Dendritic cell treated with granulocyte-macrophage colony-stimulating factor and Interleukin-4, amounts not matched to agents 40 ng/mL and 50 ng/mL, for 4 days (primary cell): ENCODE measurements at regions of chr17 and their contacts with region 1.

Region 1: GRCh38 chr17:80892019-80892855 is 99.4 kb upstream of the CHMP6 start:
- H3K4me3 Mint-ChIP-seq: peak overlapping the region; percentile 59
- H3K27ac Mint-ChIP-seq: peak overlapping the region; percentile 81
- H3K4me1 Mint-ChIP-seq: peaks cover 48% of the 10 kb centered on the region
- H3K27me3 Mint-ChIP-seq: peaks cover 7% of the 10 kb centered on the region

Region 2: GRCh38 chr17:80832888-80833583 is 59.2 kb before region 1 on chr17:
- intact Hi-C with region 1: no loop called
- H3K4me3 Mint-ChIP-seq: peak overlapping the region; percentile 82
- H3K27ac Mint-ChIP-seq: peak overlapping the region; percentile 78
- H3K4me1 Mint-ChIP-seq: peaks cover 30% of the 10 kb centered on the region
- H3K27me3 Mint-ChIP-seq: no peaks in the 10 kb centered on the region

Region 3: DNA sequence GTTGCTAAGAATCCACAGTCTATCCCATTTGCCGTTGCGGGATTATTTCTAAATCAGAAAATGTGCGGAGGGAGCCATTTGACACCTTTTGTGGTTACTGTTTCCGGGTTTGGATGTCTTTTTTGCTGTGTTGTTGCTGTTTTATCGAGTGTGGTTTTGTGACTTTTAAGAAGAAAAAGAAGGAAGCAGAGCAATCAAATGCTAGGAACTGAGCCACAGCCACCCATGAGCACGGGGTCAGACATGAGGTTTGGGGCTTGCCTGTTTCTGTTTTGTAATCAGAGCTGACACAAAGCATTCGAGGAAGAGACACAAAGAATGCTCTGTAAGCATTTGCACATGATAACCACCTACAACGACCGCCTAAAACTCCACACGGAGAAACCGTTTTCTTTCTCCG is 46.3 kb after region 1 on chr17:
- intact Hi-C with region 1: loop called (anchors 5 kb)
- H3K4me3 Mint-ChIP-seq: peak overlapping the region; percentile 34
- H3K27ac Mint-ChIP-seq: peak overlapping the region; percentile 96
- H3K4me1 Mint-ChIP-seq: peaks cover 69% of the 10 kb centered on the region
- H3K27me3 Mint-ChIP-seq: peaks cover 2% of the 10 kb centered on the region